ENCODE measurements at regions of chr15 and their contacts with region 1.

Region 1: DNA sequence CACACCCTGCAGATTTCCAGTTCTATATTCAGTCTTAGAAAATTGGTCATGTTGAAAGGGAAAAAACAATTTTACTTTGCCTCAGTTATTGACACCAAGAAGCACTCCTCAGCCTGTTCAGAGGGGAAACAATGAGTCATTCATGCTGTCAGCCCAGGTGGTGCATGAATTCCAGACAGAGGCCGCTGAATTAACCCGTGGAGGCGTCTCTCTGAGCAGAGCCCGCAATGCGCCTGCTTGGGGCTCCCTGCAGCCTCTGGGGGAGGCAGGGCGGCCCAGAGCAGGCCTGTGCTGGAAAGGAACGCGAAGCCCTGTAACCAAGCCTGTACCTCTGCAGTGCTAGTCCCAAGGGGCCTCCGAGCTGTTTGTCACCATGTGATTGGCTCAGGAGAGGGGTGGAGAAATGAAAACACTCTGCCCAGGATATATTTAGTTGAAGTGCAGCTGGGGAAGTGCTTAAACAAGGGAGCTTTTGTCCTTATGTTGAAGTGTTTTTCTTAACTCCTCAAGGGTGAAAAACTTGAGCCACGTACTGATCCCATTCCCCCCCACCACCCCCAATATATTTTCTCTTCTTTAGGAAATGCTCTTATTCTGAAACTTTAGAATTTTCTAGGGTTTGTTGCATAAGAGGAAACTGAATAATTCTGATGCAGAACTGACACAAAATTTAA is 68.3 kb upstream of the CHD2 start:
- DNase-seq: peak; percentile 95
- H3K4me3 Mint-ChIP-seq: peak overlapping the region; percentile 70
- H3K27ac Mint-ChIP-seq: peak overlapping the region; percentile 99
- H3K4me1 Mint-ChIP-seq: peaks cover 52% of the 10 kb centered on the region
- H3K27me3 Mint-ChIP-seq: peaks cover 2% of the 10 kb centered on the region

Region 2: DNA sequence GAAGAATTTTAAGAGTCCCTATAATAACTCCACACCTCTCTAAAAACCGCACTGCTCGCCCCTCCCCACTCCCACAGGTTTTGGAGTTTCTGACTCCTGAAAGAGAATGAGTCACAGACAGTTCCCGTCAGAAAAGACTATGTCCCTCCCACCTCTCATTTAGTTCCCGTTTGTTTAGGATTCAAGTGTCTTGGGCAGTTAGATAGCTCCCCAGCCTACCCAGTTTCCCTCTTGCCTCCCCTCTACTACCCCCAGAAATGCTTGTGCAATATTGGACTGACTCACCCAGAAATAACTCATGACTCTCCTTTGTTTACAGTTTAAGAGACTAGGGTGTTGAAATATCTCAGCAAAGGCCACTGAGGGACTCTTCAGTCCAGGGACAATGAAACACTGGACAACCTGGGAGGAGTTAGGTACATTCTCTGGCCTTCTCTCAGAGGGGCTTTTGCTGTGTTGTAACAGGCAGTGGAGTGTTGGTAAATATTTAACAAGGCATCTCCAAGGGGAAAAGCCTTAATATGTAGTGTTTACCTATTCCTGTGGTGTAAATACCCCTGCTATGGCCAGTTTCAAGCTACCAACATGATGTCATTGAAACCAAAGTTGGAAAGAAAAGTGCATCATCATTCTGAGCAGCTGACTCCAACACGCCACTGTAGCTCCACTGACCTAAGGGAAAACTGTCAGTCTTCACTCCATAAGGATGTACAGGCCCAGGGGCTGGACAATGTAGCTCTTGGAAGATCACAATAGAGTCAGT is 27.8 kb before region 1 on chr15:
- CTCF ChIA-PET with region 1: interaction called, 12 read pairs
- POLR2A ChIA-PET with region 1: interaction called, 94 read pairs
- intact Hi-C with region 1: loop called (anchors 1 kb)
- DNase-seq: peak; percentile 94
- H3K4me3 Mint-ChIP-seq: peak overlapping the region; percentile 10
- H3K27ac Mint-ChIP-seq: peak overlapping the region; percentile 88
- H3K4me1 Mint-ChIP-seq: peaks cover 36% of the 10 kb centered on the region
- H3K27me3 Mint-ChIP-seq: no peaks in the 10 kb centered on the region

Region 3: DNA sequence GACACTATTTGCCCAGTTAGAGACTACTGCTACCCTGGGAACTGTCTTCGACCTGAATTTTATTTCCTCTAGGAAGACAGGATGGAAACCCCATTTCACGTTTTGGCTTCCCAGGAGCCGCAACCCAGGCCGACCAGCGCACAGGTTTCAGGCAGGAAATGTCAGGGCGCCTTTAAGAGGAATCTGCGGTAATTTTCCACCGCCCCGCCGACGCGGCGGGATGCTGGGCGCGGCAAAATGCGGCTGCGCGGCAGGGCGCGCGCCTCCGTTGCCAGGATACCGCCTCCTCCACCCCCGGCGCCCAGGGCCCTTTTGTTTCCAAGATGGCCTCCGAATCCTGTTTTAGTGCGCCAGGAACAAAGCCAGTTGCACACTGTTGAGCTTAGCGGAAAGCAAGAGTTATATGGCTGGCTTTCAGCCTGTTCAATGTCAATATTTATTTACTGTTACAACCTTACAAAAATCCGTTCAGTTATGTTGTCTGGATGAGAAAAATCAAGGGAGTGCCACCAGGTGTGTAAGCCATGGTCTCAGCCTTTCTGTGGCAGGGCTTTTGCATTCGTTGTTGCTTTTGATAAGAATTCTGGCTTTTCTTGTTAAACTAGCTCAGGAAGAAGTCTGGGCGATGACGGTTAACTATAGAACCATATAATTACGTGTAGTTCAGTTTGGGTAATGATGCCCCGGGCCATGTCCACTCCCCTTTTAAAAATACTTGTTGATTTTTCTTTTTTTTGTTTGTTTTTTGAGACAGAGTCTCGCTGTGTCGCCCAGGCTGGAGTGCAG is 11.4 kb before region 1 on chr15:
- CTCF ChIA-PET with region 1: interaction called, 48 read pairs
- POLR2A ChIA-PET with region 1: interaction called, 126 read pairs
- intact Hi-C with region 1: loop called (anchors 1 kb)
- DNase-seq: peak; percentile 92
- H3K4me3 Mint-ChIP-seq: peak overlapping the region; percentile 83
- H3K27ac Mint-ChIP-seq: peak overlapping the region; percentile 83
- H3K4me1 Mint-ChIP-seq: peaks cover 59% of the 10 kb centered on the region
- H3K27me3 Mint-ChIP-seq: no peaks in the 10 kb centered on the region

Region 4: DNA sequence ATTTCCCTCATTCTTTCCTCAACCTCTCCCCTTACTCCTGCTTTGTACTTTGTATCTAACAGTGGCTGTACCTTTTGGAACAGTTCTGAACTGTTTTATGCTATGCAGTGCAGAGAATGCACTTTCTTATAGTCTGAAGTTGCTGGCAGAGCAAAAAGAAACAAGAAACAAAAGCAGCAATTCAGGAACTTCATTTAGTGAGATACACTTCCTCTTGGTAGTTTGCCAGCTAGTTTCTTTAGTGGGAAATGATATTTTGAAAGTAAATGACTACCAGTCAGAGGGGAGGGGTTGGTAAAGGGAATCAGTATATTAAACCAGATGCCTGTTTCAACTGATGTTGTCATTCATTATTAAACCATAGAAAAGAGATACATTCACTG is 13.3 kb after region 1 on chr15:
- CTCF ChIA-PET with region 1: interaction called, 16 read pairs
- POLR2A ChIA-PET with region 1: interaction called, 30 read pairs
- intact Hi-C with region 1: loop called (anchors 1 kb)
- DNase-seq: no peak
- H3K4me3 Mint-ChIP-seq: peak overlapping the region; percentile 57
- H3K27ac Mint-ChIP-seq: peak overlapping the region; percentile 89
- H3K4me1 Mint-ChIP-seq: peaks cover 70% of the 10 kb centered on the region
- H3K27me3 Mint-ChIP-seq: no peaks in the 10 kb centered on the region

Region 5: GRCh38 chr15:92903941-92904831 is 72.4 kb after region 1 on chr15:
- CTCF ChIA-PET with region 1: interaction called, 9 read pairs
- POLR2A ChIA-PET with region 1: interaction called, 39 read pairs
- intact Hi-C with region 1: loop called (anchors 1 kb)
- DNase-seq: peak; percentile 100
- H3K4me3 Mint-ChIP-seq: peak overlapping the region; percentile 97
- H3K27ac Mint-ChIP-seq: peak overlapping the region; percentile 100
- H3K4me1 Mint-ChIP-seq: peaks cover 55% of the 10 kb centered on the region
- H3K27me3 Mint-ChIP-seq: peaks cover 3% of the 10 kb centered on the region

Measured in activated CD4-positive, alpha-beta memory T cell treated with anti-CD3 and anti-CD28 coated beads for 36 hours (primary cell).